ENCODE measurements at regions of chr5 and their contacts with region 1.

Region 1: DNA sequence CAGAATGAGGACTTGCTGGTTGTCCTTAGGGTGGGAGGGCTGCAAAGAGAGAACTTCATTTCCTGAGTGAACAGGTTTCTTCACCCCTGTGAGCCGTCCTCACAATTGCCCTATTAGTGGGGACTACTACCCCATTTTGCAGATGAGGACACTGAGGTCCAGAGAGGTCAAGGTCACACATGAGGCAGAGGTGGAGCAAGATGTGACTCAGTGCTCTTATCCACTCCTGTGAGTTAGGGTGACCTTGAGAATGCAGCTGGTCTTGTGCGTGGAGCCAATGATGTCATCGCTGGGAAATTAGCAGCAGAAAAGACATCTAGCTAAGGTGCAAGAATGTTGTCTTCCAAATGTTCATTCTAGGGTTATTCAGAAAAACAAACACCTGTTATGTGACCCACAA is 26.9 kb downstream of the GPRIN1 start:
- DNase-seq: no peak
- ATAC-seq: no peak
- H3K4me3 ChIP-seq: no peak overlapping the region
- H3K27ac ChIP-seq: no peak overlapping the region
- H3K4me1 ChIP-seq: no peaks in the 10 kb centered on the region
- H3K27me3 ChIP-seq: no peaks in the 10 kb centered on the region

Region 2: GRCh38 chr5:176647030-176647866 is 64.2 kb after region 1 on chr5 and contains the start of gene TSPAN17:
- intact Hi-C with region 1: loop called in 1 of 4 experiments (anchors 10 kb)
- DNase-seq: peak; percentile 100
- ATAC-seq: peak; percentile 98 to 99
- H3K4me3 ChIP-seq: peak within 1 kb of the TSS; percentile 84
- H3K27ac ChIP-seq: peak within 1 kb of the TSS; percentile 75
- H3K4me1 ChIP-seq: peaks cover 1% of the 10 kb centered on the region
- H3K27me3 ChIP-seq: no peaks in the 10 kb centered on the region
- total RNA-seq, gene TSPAN17: 16.1 to 23.7 (median 18.8) TPM

Region 3: GRCh38 chr5:176664886-176665285 is 81.8 kb after region 1 on chr5:
- intact Hi-C with region 1: no loop called
- DNase-seq: peak in 1 of 3 donors; percentile 37
- ATAC-seq: no peak
- H3K4me3 ChIP-seq: no peak overlapping the region
- H3K27ac ChIP-seq: no peak overlapping the region
- H3K4me1 ChIP-seq: no peaks in the 10 kb centered on the region
- H3K27me3 ChIP-seq: no peaks in the 10 kb centered on the region

Region 4: DNA sequence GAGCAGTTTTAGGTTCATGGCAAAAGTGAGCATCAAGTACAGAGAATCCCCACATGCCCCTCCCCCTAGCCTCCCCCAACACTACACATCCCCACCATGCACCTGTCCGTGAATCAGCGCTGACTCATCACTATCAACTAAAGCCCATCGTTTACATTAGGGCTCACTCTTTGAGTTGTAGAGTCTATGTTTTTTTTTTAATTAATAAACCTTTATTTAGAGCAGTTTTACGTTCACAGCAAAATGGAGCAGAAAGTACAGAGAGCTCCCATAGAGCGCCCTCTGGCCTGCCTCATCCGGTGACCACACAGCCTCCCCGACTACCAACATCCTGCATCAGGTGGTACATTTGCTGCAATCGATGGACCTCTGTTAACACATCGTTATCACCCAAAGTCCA is 179.4 kb after region 1 on chr5:
- intact Hi-C with region 1: no loop called
- DNase-seq: no peak
- ATAC-seq: no peak
- H3K4me3 ChIP-seq: no peak overlapping the region
- H3K27ac ChIP-seq: no peak overlapping the region
- H3K4me1 ChIP-seq: no peaks in the 10 kb centered on the region
- H3K27me3 ChIP-seq: peaks cover 3% of the 10 kb centered on the region

Region 5: GRCh38 chr5:177256296-177256695 is 673.2 kb after region 1 on chr5:
- intact Hi-C with region 1: no loop called
- DNase-seq: no peak
- ATAC-seq: no peak
- H3K4me3 ChIP-seq: no peak overlapping the region
- H3K27ac ChIP-seq: no peak overlapping the region
- H3K4me1 ChIP-seq: no peaks in the 10 kb centered on the region
- H3K27me3 ChIP-seq: no peaks in the 10 kb centered on the region

Measured in right cardiac atrium (tissue), 5 donors.